Activated B cell treated with CpG ODN at 0.5 μM for 24 hours (primary cell): ENCODE measurements at regions of chr1 and their contacts with region 1.

Region 1: GRCh38 chr1:167650269-167651160 is 20.5 kb downstream of the RCSD1 start:
- DNase-seq: no peak
- ATAC-seq: peak; percentile 68
- H3K4me3 Mint-ChIP-seq: peak overlapping the region; percentile 73
- H3K27ac Mint-ChIP-seq: peak overlapping the region; percentile 93
- H3K4me1 Mint-ChIP-seq: peaks cover 94% of the 10 kb centered on the region
- H3K27me3 Mint-ChIP-seq: no peaks in the 10 kb centered on the region
- CTCF ChIP-seq: no peak

Region 2: DNA sequence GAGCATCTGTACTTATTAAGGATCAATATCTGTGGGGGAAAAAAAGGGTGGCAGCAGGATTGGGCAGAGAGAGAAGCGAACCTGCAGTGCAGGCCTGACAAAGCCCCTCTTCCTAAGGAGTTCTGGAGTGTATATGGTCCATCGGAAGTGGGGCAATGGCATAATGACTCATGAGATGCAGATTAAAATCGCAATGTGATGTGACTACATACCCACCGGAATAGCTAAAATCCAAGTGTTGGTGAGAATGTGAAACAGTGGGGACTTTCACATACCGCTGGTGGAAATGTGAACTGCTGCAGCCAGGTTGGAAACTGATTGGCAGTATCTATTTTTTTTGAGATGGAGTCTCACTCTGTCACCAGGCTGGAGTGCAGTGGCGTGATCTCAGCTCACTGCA is 88.8 kb before region 1 on chr1:
- CTCF ChIA-PET with region 1: no interaction called
- POLR2A ChIA-PET with region 1: no interaction called
- intact Hi-C with region 1: no loop called
- DNase-seq: no peak
- ATAC-seq: no peak
- H3K4me3 Mint-ChIP-seq: no peak overlapping the region
- H3K27ac Mint-ChIP-seq: no peak overlapping the region
- H3K4me1 Mint-ChIP-seq: peaks cover 13% of the 10 kb centered on the region
- H3K27me3 Mint-ChIP-seq: no peaks in the 10 kb centered on the region
- CTCF ChIP-seq: no peak

Region 3: DNA sequence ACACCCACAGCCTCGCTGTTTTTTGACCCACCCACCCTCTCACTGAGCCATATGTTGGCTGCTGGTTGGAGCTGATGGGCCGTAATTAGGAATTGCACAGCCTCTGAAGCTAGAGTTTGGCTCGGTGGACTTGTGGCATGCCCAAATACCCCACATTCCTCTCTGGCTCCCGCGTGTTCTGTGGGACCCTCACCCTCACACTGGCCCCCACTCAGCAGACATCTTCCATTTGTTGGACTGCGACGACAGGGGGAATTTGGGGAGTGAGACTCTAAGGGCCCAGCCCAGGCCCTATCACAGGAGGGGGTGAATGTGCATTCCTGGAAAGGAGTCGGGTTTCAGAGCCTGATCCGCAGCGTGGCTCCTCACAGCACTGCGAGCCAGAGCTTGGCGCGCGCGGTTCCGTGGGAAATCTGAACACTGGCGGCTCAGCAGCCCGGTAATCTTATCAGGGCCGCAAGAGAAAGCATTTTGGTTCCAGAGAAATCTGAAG is 15.3 kb before region 1 on chr1:
- CTCF ChIA-PET with region 1: interaction called, 11 read pairs
- POLR2A ChIA-PET with region 1: interaction called, 82 read pairs
- intact Hi-C with region 1: loop called (anchors 1 kb)
- DNase-seq: no peak
- ATAC-seq: no peak
- H3K4me3 Mint-ChIP-seq: no peak overlapping the region
- H3K27ac Mint-ChIP-seq: peak overlapping the region; percentile 77
- H3K4me1 Mint-ChIP-seq: peaks cover 89% of the 10 kb centered on the region
- H3K27me3 Mint-ChIP-seq: no peaks in the 10 kb centered on the region
- CTCF ChIP-seq: no peak

Region 4: GRCh38 chr1:167669209-167670124 is 19.0 kb after region 1 on chr1:
- CTCF ChIA-PET with region 1: interaction called, 3 read pairs
- POLR2A ChIA-PET with region 1: interaction called, 6 read pairs
- intact Hi-C with region 1: loop called (anchors 1 kb)
- DNase-seq: no peak
- ATAC-seq: peak; percentile 43
- H3K4me3 Mint-ChIP-seq: peak overlapping the region; percentile 49
- H3K27ac Mint-ChIP-seq: peak overlapping the region; percentile 77
- H3K4me1 Mint-ChIP-seq: peaks cover 99% of the 10 kb centered on the region
- H3K27me3 Mint-ChIP-seq: no peaks in the 10 kb centered on the region
- CTCF ChIP-seq: no peak

Region 5: GRCh38 chr1:169186106-169186505 is 1535.6 kb after region 1 on chr1:
- CTCF ChIA-PET with region 1: no interaction called
- POLR2A ChIA-PET with region 1: no interaction called
- intact Hi-C with region 1: no loop called
- DNase-seq: no peak
- ATAC-seq: no peak
- H3K4me3 Mint-ChIP-seq: no peak overlapping the region
- H3K27ac Mint-ChIP-seq: no peak overlapping the region
- H3K4me1 Mint-ChIP-seq: no peaks in the 10 kb centered on the region
- H3K27me3 Mint-ChIP-seq: no peaks in the 10 kb centered on the region
- CTCF ChIP-seq: no peak